ENCODE measurements at regions of chr4 and their contacts with region 1.

Region 1: GRCh38 chr4:166165829-166166420 is 292.9 kb downstream of the TLL1 start:
- DNase-seq: peak in 1 of 2 donors; percentile 87
- H3K4me3 ChIP-seq: no peak overlapping the region
- H3K27ac ChIP-seq: no peak overlapping the region
- H3K4me1 ChIP-seq: no peaks in the 10 kb centered on the region
- H3K27me3 ChIP-seq: no peaks in the 10 kb centered on the region
- CTCF ChIP-seq: peak in 5 of 7 experiments; percentile 27 to 68 (median 51)
- EP300 ChIP-seq: no peak
- POLR2A ChIP-seq: no peak

Region 2: DNA sequence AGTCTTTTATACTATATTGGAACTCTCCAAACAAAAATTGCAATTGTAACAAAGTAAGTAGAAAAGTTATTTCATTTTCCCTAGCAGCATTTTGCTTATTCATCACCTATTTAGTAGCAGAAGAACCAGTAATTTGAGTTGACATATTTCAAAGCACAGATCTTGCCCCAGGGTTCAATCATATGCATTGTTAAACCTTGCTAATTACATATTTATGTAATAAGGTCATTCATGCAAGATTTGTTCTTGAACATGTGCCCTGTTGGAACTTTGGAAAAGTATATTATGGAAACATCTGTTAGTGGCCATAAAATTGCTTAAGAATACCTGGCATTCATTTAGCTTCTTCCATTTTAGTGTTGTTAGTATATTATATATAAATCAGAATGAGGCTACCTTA is 101.2 kb before region 1 on chr4:
- intact Hi-C with region 1: no loop called
- DNase-seq: no peak
- H3K4me3 ChIP-seq: no peak overlapping the region
- H3K27ac ChIP-seq: no peak overlapping the region
- H3K4me1 ChIP-seq: no peaks in the 10 kb centered on the region
- H3K27me3 ChIP-seq: no peaks in the 10 kb centered on the region
- CTCF ChIP-seq: no peak
- EP300 ChIP-seq: no peak
- POLR2A ChIP-seq: no peak

Region 3: GRCh38 chr4:166458756-166459155 is 292.8 kb after region 1 on chr4:
- intact Hi-C with region 1: no loop called
- DNase-seq: no peak
- H3K4me3 ChIP-seq: no peak overlapping the region
- H3K27ac ChIP-seq: no peak overlapping the region
- H3K4me1 ChIP-seq: no peaks in the 10 kb centered on the region
- H3K27me3 ChIP-seq: no peaks in the 10 kb centered on the region
- CTCF ChIP-seq: no peak
- EP300 ChIP-seq: no peak
- POLR2A ChIP-seq: no peak

Region 4: GRCh38 chr4:166594326-166594946 is 428.5 kb after region 1 on chr4:
- intact Hi-C with region 1: loop called (anchors 5 kb)
- DNase-seq: peak; percentile 37 to 49
- H3K4me3 ChIP-seq: no peak overlapping the region
- H3K27ac ChIP-seq: no peak overlapping the region
- H3K4me1 ChIP-seq: no peaks in the 10 kb centered on the region
- H3K27me3 ChIP-seq: no peaks in the 10 kb centered on the region
- CTCF ChIP-seq: peak in 4 of 7 experiments; percentile 8 to 41 (median 34)
- EP300 ChIP-seq: no peak
- POLR2A ChIP-seq: no peak

Measured in stomach (tissue), 19 donors.